ENCODE measurements at regions of chr1 and their contacts with region 1.

Region 1: GRCh38 chr1:161192476-161193465 is 6.1 kb downstream of the ADAMTS4 start:
- DNase-seq: no peak
- ATAC-seq: peak; percentile 72

Region 2: DNA sequence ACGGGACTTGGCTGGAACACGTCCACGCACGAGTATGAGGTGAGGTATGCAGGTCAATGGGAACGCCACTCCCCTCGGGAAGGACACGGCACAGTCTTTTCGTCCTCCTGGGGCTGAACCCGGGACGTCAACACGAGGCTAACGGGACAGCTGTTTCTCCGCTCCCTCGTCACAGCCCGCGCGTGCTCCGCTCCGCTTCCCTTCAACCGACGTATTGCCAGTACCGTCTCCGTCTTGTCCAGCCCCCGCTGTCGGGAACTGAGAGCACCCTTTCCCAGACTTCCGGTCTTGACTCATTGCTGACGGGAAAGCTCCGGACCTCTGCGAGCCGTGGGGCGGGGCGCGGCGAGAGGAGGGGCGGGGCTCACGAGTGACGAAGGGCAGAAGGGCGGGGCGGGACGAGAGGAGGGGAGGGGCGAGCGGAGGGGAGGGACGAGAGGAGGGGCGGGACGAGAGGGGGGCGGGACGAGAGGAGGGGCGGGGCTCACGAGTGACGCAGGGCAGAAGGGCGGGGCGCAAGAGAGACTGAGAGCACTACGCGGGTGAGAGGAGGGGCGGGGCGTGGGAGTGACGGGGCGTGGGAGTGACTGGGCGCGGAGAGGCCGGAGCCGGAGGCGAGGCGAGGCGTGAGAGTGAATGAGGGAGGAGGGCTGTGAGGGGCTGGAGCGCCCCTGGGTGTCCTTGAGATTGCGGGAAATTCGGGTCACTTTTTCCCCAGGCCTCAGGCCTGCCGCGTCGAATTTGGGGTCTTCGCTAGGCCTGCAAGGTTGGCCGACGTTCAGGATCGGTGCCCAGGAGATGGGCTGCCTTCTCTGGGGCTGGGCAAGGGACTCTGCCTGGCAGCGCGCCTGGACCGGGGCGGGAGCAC is 197.2 kb after region 1 on chr1:
- intact Hi-C with region 1: loop called (anchors 10 kb)
- DNase-seq: peak; percentile 99
- ATAC-seq: peak; percentile 95

Measured in Right ventricle myocardium superior (tissue), 1 donor.